ENCODE measurements at regions of chr1 and their contacts with region 1.

Region 1: DNA sequence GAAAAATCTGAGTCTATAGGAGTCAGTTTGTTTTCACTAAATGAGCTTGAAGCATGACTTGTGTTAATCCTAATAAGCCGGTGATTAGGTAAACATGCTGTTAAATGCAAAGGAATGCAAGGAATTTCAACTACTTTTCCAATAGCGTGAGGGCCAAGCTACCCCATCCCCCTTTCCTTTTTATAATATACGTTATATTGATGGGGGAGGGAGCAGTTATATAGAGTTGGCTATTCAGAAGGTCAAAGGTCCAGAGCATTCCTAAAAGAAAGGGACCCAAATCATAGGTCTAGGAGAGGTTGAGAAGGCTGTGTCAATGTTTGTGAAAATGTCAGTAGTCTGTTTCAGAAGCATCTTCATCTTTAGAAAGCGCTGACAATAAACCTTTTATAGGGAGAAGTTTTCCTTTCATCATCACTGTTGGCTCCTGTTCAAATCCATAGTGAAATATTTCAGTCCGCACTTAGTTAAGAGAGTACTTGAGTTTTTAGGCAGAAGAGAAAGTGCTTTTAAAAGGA is 3.8 kb downstream of the CCN1 start:
- DNase-seq: peak in 1 of 2 experiments; percentile 42
- H3K4me3 ChIP-seq: peak overlapping the region in 1 of 4 experiments; percentile 84; a peak in 2 of 8 replicates
- H3K27ac ChIP-seq: no peak overlapping the region
- H3K4me1 ChIP-seq: peaks cover 3 to 24% (median 15%) of the 10 kb centered on the region in 4 experiments
- H3K27me3 ChIP-seq: peaks cover 0 to 2% (median under 1%) of the 10 kb centered on the region in 4 experiments; a peak in 3 of 7 replicates
- CTCF ChIP-seq: no peak
- EP300 ChIP-seq: peak in 1 of 2 experiments; percentile 91; a peak in 1 of 3 replicates
- POLR2A ChIP-seq: peak; percentile 85 to 87
- RAD21 ChIP-seq: no peak

Region 2: DNA sequence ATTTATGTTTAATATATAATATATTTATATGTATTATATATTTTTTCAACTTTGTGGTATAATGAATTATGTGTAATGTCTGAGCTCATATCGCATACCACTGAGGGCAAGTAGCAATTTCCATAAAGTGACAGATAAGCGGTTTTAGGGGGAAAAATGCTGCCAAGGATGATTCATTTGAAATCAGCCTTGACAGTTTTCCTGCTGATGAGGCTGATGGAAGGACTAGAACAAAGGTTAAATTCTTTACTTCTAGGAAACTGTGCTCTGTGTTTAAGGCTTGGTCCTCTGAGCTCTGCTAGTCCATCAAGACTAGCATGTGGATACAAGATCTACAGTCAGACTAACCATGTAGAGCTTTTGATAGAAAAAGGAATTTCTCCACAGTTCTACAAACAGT is 100.1 kb before region 1 on chr1:
- CTCF ChIA-PET with region 1: no interaction called
- POLR2A ChIA-PET with region 1: no interaction called
- DNase-seq: no peak
- H3K4me3 ChIP-seq: no peak overlapping the region
- H3K27ac ChIP-seq: no peak overlapping the region
- H3K4me1 ChIP-seq: no peaks in the 10 kb centered on the region
- H3K27me3 ChIP-seq: no peaks in the 10 kb centered on the region
- CTCF ChIP-seq: no peak
- EP300 ChIP-seq: no peak
- POLR2A ChIP-seq: no peak
- RAD21 ChIP-seq: no peak

Region 3: GRCh38 chr1:85569122-85569521 is 15.2 kb before region 1 on chr1:
- CTCF ChIA-PET with region 1: interaction called, 7 read pairs
- POLR2A ChIA-PET with region 1: interaction called, 39 read pairs
- DNase-seq: no peak
- H3K4me3 ChIP-seq: no peak overlapping the region
- H3K27ac ChIP-seq: no peak overlapping the region
- H3K4me1 ChIP-seq: no peaks in the 10 kb centered on the region
- H3K27me3 ChIP-seq: peaks cover 0 to 1% (median 0%) of the 10 kb centered on the region in 4 experiments; a peak in 1 of 7 replicates
- CTCF ChIP-seq: no peak
- EP300 ChIP-seq: no peak
- POLR2A ChIP-seq: no peak
- RAD21 ChIP-seq: no peak

Region 4: GRCh38 chr1:85599076-85599491 is 14.8 kb after region 1 on chr1:
- CTCF ChIA-PET with region 1: interaction called, 11 read pairs
- POLR2A ChIA-PET with region 1: interaction called, 311 read pairs
- DNase-seq: no peak
- H3K4me3 ChIP-seq: no peak overlapping the region
- H3K27ac ChIP-seq: no peak overlapping the region
- H3K4me1 ChIP-seq: peaks cover 2 to 11% (median 6%) of the 10 kb centered on the region in 4 experiments; a peak in 4 of 7 replicates
- H3K27me3 ChIP-seq: peaks cover 0 to 4% (median 1%) of the 10 kb centered on the region in 4 experiments; a peak in 2 of 7 replicates
- CTCF ChIP-seq: no peak
- EP300 ChIP-seq: no peak
- POLR2A ChIP-seq: no peak
- RAD21 ChIP-seq: no peak

Region 5: GRCh38 chr1:85607126-85607912 is 23.0 kb after region 1 on chr1:
- CTCF ChIA-PET with region 1: interaction called, 13 read pairs
- POLR2A ChIA-PET with region 1: interaction called, 311 read pairs
- DNase-seq: peak; percentile 77 to 93
- H3K4me3 ChIP-seq: peak overlapping the region in 1 of 4 experiments; percentile 21; a peak in 2 of 8 replicates
- H3K27ac ChIP-seq: peak overlapping the region; percentile 70; the same call in 1 of the 2 replicates
- H3K4me1 ChIP-seq: peaks cover 9 to 19% (median 14%) of the 10 kb centered on the region in 4 experiments
- H3K27me3 ChIP-seq: no peaks in the 10 kb centered on the region; a peak in 1 of 7 replicates
- CTCF ChIP-seq: no peak
- EP300 ChIP-seq: peak in 1 of 2 experiments; percentile 95; a peak in 1 of 3 replicates
- POLR2A ChIP-seq: peak in 1 of 2 experiments; percentile 66; a peak in 2 of 3 replicates
- RAD21 ChIP-seq: peak; percentile 9 to 15; a peak in 2 of 4 replicates

Region 6: GRCh38 chr1:85612704-85613361 is 28.5 kb after region 1 on chr1:
- CTCF ChIA-PET with region 1: interaction called, 6 read pairs
- POLR2A ChIA-PET with region 1: interaction called, 311 read pairs
- DNase-seq: no peak
- H3K4me3 ChIP-seq: no peak overlapping the region
- H3K27ac ChIP-seq: no peak overlapping the region
- H3K4me1 ChIP-seq: peaks cover under 1 to 10% (median 7%) of the 10 kb centered on the region in 4 experiments; a peak in 5 of 7 replicates
- H3K27me3 ChIP-seq: no peaks in the 10 kb centered on the region; a peak in 1 of 7 replicates
- CTCF ChIP-seq: peak; percentile 21 to 67 (median 62)
- EP300 ChIP-seq: no peak
- POLR2A ChIP-seq: no peak
- RAD21 ChIP-seq: peak; percentile 76 to 84

Region 7: DNA sequence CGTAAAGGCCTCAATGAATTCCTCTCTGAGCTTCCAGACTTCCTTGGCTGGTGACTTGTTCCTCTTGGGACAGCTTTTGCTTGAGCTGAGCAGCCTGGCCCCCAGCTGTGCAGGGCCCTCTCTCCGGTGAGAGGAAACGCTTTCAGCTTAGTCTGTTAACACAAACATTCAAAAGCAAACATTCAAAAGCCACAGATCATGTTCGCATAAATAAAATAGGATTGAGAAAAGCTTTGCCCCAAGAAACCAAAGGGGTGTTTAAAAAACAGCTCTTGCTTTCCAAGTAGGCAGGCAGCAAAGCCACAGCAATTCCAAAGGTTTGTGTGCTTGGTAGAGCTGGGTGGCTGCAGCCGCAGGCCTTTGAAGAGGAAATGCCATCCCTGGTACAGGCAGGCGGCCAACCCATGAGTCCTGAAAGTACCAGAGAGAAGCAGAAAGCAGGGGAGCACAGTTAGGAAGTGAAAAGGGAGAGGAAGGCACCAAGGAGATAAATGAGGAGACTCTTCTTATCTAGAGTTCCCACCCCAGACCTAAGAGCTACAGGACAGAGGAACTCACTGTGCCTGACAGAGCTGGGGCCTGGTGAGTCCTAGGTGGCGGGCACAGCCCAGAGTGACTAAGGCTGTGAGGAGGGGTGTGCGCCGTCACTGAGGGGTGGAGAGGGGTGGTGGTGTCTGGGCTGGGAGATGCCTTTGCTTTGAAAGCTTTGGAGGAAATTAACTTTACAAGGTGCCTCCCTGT is 44.6 kb after region 1 on chr1:
- CTCF ChIA-PET with region 1: interaction called, 5 read pairs
- POLR2A ChIA-PET with region 1: interaction called, 20 read pairs
- DNase-seq: no peak
- H3K4me3 ChIP-seq: no peak overlapping the region
- H3K27ac ChIP-seq: no peak overlapping the region
- H3K4me1 ChIP-seq: peaks cover 3 to 11% (median 6%) of the 10 kb centered on the region in 4 experiments; a peak in 6 of 7 replicates
- H3K27me3 ChIP-seq: no peaks in the 10 kb centered on the region
- CTCF ChIP-seq: no peak
- EP300 ChIP-seq: no peak
- POLR2A ChIP-seq: no peak
- RAD21 ChIP-seq: no peak

Region 8: DNA sequence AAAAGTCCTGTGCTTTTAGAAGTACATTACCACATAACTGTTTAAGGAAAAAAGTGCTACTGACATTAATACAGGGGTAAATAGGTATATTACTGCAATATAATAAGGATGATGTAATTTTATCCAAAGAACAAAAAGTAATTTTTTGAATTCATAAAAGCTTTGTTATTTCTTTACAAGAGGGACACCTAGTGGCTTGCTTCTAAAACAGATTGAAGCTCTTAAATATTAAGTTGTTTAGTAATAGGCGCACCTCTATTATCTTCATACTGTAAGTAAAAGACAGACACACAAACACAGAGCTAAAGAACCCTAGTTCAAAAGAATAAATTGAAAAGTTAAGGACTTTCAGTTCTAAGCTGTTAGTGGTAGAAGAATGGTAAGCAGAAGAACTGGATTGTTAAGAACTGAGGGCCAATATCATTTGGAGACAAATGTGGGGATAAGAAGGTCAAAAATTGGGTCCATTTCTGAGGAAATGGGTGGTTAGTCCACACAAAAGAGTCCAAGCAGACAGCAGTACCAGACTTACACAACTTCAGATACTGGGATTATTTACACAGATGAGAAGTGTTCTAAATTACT is 108.5 kb after region 1 on chr1:
- CTCF ChIA-PET with region 1: interaction called, 25 read pairs
- POLR2A ChIA-PET with region 1: interaction called, 14 read pairs
- DNase-seq: no peak
- H3K4me3 ChIP-seq: no peak overlapping the region
- H3K27ac ChIP-seq: no peak overlapping the region
- H3K4me1 ChIP-seq: no peaks in the 10 kb centered on the region
- H3K27me3 ChIP-seq: no peaks in the 10 kb centered on the region
- CTCF ChIP-seq: peak in 2 of 3 experiments; percentile 6 to 22; a peak in 2 of 4 replicates
- EP300 ChIP-seq: no peak
- POLR2A ChIP-seq: no peak
- RAD21 ChIP-seq: peak in 1 of 2 experiments; percentile 45; a peak in 3 of 4 replicates